Endothelial cell of umbilical vein (primary cell): ENCODE measurements at regions of chr2 and their contacts with region 1.

Region 1: DNA sequence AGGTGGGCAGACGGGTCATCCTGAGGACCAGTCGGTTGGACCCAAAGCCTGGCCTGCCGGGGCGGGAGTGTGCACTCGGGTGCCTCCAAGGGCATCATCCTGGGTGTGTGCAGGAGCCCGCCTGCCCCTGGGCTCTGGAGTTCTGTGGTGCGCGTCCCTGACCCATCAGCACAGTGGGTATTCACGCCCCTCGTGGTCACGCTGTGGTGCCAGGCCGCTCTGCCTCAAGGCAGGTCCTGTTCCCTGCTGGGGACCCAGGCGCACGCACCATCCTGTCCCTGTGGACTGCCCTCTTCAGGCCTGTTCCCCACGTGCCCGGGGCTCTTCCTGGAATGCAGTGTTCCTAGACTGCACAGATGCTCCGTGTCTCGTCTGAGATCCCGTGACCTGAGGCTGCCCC is 14.3 kb upstream of the D2HGDH start:
- DNase-seq: no peak
- H3K4me3 ChIP-seq: no peak overlapping the region
- H3K27ac ChIP-seq: no peak overlapping the region
- H3K4me1 ChIP-seq: no peaks in the 10 kb centered on the region
- H3K27me3 ChIP-seq: no peaks in the 10 kb centered on the region
- CTCF ChIP-seq: no peak
- POLR2A ChIP-seq: no peak

Region 2: DNA sequence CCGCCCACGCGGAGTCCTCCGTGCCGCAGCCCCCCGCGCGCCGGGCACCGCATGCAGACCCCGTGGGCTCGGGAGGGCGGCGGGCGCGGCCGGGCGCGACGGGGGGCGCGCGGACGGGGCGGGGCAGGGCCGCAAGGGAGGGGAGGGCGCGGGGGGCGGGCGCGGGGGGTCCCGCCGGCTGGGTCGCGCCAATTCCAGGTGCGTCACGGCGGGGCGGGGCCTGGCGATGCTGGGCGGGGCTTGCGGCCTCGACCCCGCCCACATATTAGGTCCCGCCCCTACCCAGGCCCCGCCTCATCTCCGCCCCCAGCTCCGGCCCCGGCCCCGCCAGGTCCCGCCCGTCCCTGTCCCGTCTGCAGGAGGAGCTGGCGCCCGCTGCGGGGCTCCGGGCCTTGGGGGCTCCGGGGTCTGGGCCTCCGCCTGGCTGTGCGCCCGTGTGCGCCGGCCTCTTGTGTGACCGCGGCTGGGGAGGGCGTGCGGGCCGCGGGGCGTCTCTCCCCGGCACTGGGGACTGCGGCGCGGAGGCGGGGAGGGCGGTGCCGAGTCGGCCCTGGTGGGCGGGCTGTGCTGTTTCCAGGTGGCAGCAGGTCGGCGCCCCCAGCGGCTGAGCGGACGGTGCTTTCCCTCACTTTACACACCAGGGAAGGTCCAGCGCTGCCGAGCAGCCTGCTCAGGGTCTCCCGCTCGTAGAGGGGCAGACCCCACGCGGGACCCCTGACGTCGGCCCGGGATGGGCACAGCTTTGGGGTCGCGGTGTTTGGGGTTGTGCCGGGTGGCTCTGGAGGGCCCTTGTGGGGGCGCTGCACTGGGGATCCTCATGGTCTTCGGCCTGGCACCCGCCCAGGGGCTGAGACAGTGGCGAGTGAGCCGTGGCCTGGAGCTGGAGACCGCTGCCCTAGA is 17.7 kb before region 1 on chr2:
- CTCF ChIA-PET with region 1: interaction called, 12 read pairs
- POLR2A ChIA-PET with region 1: no interaction called
- dilution Hi-C with region 1: no loop called
- intact Hi-C with region 1: no loop called
- DNase-seq: peak; percentile 82
- H3K4me3 ChIP-seq: peak overlapping the region; percentile 49 to 75 (median 64)
- H3K27ac ChIP-seq: peak overlapping the region; percentile 15
- H3K4me1 ChIP-seq: peaks cover 6% of the 10 kb centered on the region
- H3K27me3 ChIP-seq: no peaks in the 10 kb centered on the region
- CTCF ChIP-seq: peak; percentile 45 to 56
- POLR2A ChIP-seq: no peak